ENCODE measurements at regions of chr9 and their contacts with region 1.

Region 1: DNA sequence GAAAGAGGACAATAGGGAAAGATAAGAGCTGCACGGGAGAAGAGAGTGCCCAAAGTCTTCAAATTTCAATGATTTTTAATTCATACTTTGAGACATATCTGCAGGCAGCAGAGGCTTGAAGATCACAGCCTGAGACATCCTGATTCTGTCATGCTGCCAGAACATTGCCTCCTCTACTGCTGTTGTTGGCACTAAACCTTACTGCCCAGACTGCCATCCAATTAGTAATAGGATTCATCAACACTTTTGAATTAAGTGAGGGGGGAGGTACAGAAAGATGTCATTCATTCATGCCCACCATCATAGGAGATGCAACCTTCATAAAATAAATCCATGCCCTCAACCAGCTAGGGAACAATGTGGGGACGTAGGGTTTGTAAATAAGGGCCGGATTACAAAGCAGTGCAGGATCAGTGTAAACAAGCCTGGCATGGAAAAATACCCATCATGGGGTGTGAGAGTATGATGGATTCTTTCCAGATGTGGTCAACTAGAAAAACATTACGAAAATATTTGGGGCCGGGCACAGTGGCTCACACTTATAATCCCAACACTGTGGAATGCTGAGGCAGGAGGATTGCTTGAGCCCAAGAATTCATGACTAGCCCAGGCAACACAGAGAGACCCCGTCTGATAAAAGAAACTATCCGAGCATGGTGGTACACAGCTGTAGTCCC is 122.1 kb upstream of the DAPK1 start:
- DNase-seq: peak; percentile 84
- H3K4me3 ChIP-seq: no peak overlapping the region
- H3K27ac ChIP-seq: peak overlapping the region; percentile 62
- H3K4me1 ChIP-seq: peaks cover 32% of the 10 kb centered on the region
- H3K27me3 ChIP-seq: no peaks in the 10 kb centered on the region
- CTCF ChIP-seq: no peak

Region 2: DNA sequence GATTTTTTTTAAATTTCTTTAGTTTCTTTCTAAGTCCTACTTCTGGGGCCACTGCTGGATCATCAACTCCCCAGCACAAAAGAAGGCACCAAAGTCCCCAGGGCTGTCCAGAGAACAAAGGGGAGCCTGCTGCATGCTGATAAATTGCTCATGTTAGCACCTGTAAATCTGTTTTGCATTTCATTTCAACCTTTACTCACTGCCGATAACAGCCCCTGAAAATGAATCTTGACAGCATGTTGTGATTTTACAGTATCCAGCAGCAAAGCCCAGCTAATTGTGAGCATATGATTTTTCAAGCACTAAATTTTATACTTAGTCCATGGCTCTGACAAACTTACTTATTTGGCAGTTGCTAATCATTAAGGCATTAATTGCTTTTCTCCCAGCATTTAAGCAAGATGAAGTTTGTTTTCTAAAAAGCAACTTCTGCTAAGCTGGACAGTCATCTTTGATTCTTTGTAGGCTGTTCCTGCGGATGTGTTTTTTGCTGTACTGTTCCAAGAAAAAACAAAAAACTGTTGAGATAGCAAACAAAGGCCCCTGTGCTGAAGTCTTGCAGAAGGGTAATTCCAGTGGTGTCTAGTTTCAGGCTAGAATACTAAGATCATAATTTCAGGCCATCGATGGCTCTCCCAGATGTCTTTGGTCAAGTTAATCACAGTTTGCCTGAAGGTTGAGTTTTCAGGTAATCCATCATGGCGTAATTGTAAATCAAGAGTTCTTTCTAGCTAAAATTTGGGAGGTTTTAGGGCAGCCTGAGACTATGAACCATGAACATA is 355.2 kb before region 1 on chr9:
- CTCF ChIA-PET with region 1: interaction called, 13 read pairs
- dilution Hi-C with region 1: no loop called
- in situ Hi-C with region 1: no loop called
- intact Hi-C with region 1: no loop called
- DNase-seq: no peak
- H3K4me3 ChIP-seq: no peak overlapping the region
- H3K27ac ChIP-seq: no peak overlapping the region
- H3K4me1 ChIP-seq: no peaks in the 10 kb centered on the region
- H3K27me3 ChIP-seq: no peaks in the 10 kb centered on the region
- CTCF ChIP-seq: no peak

Region 3: DNA sequence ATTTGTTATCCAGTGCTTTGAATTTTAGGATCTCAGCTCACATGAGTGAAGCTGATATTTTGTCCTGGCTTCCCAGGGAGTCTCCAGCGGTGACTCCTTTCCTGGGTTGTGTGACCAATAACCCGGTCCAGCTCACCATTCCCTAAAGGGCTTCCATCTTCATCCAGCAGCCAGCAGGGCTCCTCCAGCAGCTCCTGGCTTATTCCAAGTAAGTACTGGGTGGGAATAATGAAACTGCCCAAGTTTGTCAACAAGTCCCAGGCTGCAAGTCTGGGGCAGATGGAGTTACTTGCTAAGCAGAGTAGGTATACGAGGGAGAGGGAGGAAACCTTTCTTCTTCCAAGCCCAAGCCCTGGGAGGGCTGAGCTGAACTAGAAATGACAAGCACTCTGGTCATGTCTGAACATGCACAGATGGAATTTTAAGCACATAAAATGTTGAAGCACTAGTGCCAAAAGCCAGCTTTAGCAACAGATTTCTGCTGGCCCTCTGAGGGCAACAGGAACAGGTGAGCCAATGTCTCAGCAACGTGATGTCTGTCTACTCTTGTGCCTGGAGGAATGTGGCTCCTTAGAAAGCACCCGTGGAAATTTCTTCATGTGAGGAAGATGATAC is 31.6 kb before region 1 on chr9:
- CTCF ChIA-PET with region 1: interaction called, 4 read pairs
- dilution Hi-C with region 1: no loop called
- in situ Hi-C with region 1: no loop called
- intact Hi-C with region 1: loop called (anchors 2 kb)
- DNase-seq: peak; percentile 57
- H3K4me3 ChIP-seq: no peak overlapping the region
- H3K27ac ChIP-seq: no peak overlapping the region
- H3K4me1 ChIP-seq: peaks cover 14% of the 10 kb centered on the region
- H3K27me3 ChIP-seq: no peaks in the 10 kb centered on the region
- CTCF ChIP-seq: no peak

Region 4: DNA sequence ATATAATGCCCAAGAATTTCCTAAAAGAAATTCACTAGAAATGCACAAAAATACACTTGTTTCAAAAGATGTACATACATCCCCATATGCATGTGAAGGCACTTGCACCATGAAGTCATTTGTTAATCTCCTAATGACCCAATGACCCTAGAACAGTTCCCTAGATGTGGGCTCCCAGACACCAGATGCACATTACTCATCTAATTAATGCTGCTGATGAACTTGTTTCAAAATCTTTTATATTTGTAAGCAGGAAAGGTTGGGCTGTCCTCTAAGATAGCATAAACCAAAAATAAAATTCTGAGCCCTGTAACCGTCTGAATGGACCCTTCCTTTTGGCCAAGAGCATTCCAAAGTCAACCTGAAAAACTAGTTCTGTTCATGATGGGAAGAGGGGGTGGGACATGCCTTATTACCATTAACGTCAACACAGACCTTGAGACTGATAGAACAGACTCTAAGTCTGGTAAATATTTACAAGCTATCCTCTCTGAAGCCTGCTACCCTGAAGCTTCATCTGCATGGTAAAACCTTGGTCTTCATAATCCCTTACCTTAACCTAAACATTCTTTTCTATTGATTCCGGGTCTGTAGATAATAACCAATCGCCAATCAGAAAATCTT is 31.1 kb after region 1 on chr9:
- CTCF ChIA-PET with region 1: no interaction called
- dilution Hi-C with region 1: no loop called
- in situ Hi-C with region 1: no loop called
- intact Hi-C with region 1: no loop called
- DNase-seq: no peak
- H3K4me3 ChIP-seq: no peak overlapping the region
- H3K27ac ChIP-seq: no peak overlapping the region
- H3K4me1 ChIP-seq: peaks cover 12% of the 10 kb centered on the region
- H3K27me3 ChIP-seq: no peaks in the 10 kb centered on the region
- CTCF ChIP-seq: no peak

Region 5: GRCh38 chr9:87497604-87498045 is 122.1 kb after region 1 on chr9 and contains the start of gene DAPK1:
- CTCF ChIA-PET with region 1: no interaction called
- dilution Hi-C with region 1: no loop called
- in situ Hi-C with region 1: no loop called
- intact Hi-C with region 1: loop called (anchors 1 kb)
- DNase-seq: peak; percentile 44
- H3K4me3 ChIP-seq: peak within 1 kb of the TSS; percentile 57 to 77 (median 69)
- H3K27ac ChIP-seq: no peak within 1 kb of the TSS
- H3K4me1 ChIP-seq: peaks cover 18% of the 10 kb centered on the region
- H3K27me3 ChIP-seq: peaks cover 7% of the 10 kb centered on the region
- CTCF ChIP-seq: no peak
- total RNA-seq, gene DAPK1: 17.1 to 33.3 TPM

Region 6: DNA sequence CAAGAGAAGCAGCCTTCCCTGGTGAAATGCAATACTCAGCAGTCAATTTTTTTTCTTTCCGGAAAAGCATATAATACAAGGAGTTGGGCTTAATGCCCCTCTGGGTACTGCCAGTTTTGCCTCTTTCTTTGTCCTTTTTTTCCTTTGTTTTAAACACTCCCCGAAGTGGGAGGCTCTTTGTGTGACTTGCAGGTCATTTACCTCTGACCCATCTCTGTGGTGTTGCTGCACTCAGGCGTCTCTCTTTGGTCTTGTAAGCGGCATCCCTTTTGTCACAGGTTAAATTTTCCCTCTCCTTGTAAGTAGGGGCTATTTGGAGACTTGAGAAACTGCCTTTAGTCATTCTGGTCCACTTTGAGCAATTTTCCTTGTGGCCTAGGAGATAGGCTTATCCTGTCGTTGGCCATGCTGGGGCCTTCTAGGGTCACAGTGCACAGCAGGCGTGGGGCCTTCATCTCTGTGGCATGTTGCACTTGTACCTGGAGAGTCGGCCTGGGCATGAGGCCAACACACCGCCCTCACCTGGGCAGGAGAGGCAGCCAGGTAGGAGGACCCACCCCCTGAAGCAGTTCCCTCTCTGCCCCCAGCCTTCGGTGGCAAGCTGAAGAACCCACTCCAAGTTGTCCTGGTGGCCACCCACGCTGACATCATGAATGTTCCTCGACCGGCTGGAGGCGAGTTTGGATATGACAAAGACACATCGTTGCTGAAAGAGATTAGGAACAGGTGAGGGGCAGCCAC is 322.7 kb after region 1 on chr9:
- CTCF ChIA-PET with region 1: no interaction called
- dilution Hi-C with region 1: no loop called
- in situ Hi-C with region 1: no loop called
- intact Hi-C with region 1: no loop called
- DNase-seq: no peak
- H3K4me3 ChIP-seq: no peak overlapping the region
- H3K27ac ChIP-seq: no peak overlapping the region
- H3K4me1 ChIP-seq: peaks cover 18% of the 10 kb centered on the region
- H3K27me3 ChIP-seq: no peaks in the 10 kb centered on the region
- CTCF ChIP-seq: no peak

Measured in mammary epithelial cell (primary cell).